Caco-2 (cell line): ENCODE measurements at regions of chr6 and their contacts with region 1.

Region 1: DNA sequence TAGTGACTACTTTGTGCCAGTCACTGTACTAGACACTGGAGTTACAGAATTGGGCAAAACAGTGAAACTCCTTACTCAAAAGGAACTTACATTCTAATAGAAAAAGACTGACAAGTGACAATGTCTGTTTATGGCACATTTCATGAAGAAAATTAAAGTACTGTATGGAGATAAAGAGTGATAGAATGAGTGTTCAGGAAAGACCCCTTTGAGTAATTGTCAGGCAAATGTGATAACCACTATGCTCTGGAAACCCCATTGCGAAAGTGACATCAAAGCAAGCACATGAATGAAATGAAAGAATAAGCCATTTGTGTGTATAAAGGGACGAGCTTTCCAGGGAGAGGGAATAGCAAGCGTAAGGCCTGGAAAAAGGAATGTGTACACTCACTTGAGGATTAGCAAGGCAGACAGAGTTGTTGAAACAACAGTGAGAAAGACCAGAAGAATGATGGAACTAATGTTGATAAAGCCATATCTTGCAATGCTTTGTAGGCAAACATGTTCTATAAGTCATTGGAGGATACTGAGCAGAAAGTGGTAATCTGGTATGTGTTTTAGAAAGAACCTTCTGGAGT is 490.0 kb downstream of the GRIK2 start:
- DNase-seq: peak; percentile 35 to 51
- H3K4me3 ChIP-seq: no peak overlapping the region
- H3K4me3 Mint-ChIP-seq: no peak overlapping the region
- H3K27ac Mint-ChIP-seq: peak overlapping the region; percentile 16
- H3K4me1 ChIP-seq: peaks cover 17% of the 10 kb centered on the region; the same call in 1 of the 2 replicates
- H3K4me1 Mint-ChIP-seq: peaks cover 17% of the 10 kb centered on the region
- H3K27me3 ChIP-seq: no peaks in the 10 kb centered on the region
- H3K27me3 Mint-ChIP-seq: no peaks in the 10 kb centered on the region
- CTCF ChIP-seq: no peak

Region 2: DNA sequence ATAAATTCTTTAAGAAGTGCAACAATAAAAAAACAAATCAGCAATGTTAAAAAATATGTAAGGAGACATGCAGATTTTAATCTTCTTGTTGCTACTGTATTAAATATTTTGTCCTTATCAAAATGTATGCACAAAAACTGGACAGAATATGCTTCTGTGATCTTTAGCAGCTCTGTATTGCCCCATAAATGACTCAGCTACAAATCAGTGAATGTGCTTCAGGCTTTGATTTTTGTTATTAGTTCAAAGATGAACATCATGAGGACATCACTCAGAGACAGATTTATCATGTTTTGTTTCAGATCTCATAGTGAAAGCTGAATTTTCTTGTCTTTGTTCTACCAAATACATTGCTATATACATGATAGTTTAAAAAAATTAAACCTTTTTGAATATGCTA is 177.6 kb before region 1 on chr6:
- CTCF ChIA-PET with region 1: no interaction called
- POLR2A ChIA-PET with region 1: no interaction called
- intact Hi-C with region 1: no loop called
- DNase-seq: no peak
- H3K4me3 ChIP-seq: no peak overlapping the region
- H3K4me3 Mint-ChIP-seq: no peak overlapping the region
- H3K27ac Mint-ChIP-seq: no peak overlapping the region
- H3K4me1 ChIP-seq: no peaks in the 10 kb centered on the region
- H3K4me1 Mint-ChIP-seq: no peaks in the 10 kb centered on the region
- H3K27me3 ChIP-seq: no peaks in the 10 kb centered on the region
- H3K27me3 Mint-ChIP-seq: no peaks in the 10 kb centered on the region
- CTCF ChIP-seq: no peak

Region 3: DNA sequence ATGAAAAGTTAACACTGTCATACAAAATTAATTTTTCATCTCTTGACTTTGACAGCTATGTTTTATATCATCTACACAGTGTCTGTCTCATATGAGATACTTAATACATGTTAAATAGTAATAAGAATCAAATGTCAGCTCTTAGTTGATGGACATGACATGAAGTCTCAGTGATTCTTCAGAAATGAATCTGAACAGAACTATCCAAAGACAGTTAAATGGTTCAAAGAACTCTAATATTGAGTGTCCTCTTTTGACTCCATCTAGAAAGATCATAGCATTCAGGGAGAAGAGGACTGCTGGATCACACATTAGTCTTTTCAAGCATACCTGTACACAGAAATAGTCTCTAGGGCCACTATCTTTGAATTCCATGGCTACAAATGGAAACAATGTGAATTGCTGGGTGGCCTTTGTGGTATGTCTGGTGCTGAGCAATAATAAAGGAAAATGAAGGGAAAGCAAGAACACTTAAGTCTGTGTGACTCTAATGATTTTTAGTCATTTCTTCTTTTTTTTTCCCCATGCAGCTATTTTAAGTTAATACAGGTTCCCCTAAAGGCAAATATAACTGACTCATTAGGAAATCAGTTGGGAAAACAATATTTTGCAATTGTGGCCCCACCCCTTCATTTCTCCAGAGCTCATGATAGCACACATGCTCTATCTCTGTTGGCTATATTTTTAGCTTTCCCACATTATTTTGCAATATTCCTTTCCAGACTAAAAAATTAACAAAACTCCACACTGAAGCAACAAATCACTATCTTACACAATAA is 122.5 kb before region 1 on chr6:
- CTCF ChIA-PET with region 1: no interaction called
- POLR2A ChIA-PET with region 1: no interaction called
- intact Hi-C with region 1: loop called (anchors 5 kb)
- DNase-seq: no peak
- H3K4me3 ChIP-seq: no peak overlapping the region
- H3K4me3 Mint-ChIP-seq: no peak overlapping the region
- H3K27ac Mint-ChIP-seq: no peak overlapping the region
- H3K4me1 ChIP-seq: peaks cover 8% of the 10 kb centered on the region; the same call in 1 of the 2 replicates
- H3K4me1 Mint-ChIP-seq: peaks cover 16% of the 10 kb centered on the region
- H3K27me3 ChIP-seq: no peaks in the 10 kb centered on the region
- H3K27me3 Mint-ChIP-seq: no peaks in the 10 kb centered on the region
- CTCF ChIP-seq: no peak

Region 4: GRCh38 chr6:101956961-101957360 is 73.5 kb after region 1 on chr6:
- CTCF ChIA-PET with region 1: no interaction called
- POLR2A ChIA-PET with region 1: no interaction called
- intact Hi-C with region 1: no loop called
- DNase-seq: no peak
- H3K4me3 ChIP-seq: no peak overlapping the region
- H3K4me3 Mint-ChIP-seq: no peak overlapping the region
- H3K27ac Mint-ChIP-seq: no peak overlapping the region
- H3K4me1 ChIP-seq: no peaks in the 10 kb centered on the region
- H3K4me1 Mint-ChIP-seq: no peaks in the 10 kb centered on the region
- H3K27me3 ChIP-seq: no peaks in the 10 kb centered on the region
- H3K27me3 Mint-ChIP-seq: no peaks in the 10 kb centered on the region
- CTCF ChIP-seq: no peak

Region 5: DNA sequence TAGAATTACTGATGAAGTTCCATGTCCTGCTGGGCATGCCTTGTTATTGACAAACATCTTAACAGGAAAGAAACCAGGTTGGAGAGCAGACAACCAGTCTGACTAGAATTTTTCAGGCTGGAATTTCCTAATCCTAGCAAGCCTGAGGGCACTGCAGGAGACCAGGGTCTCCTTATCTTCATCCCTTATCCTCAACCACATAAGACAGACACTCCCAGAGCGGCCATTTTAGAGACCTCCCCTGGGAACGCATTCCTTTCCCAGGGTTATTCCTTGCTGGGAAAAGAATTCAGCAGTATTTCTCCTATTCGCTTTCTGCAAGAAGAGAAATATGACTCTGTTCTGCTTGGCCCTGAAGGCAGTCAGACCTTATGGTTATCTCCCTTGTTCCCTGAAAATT is 313.7 kb after region 1 on chr6:
- CTCF ChIA-PET with region 1: no interaction called
- POLR2A ChIA-PET with region 1: no interaction called
- intact Hi-C with region 1: no loop called
- DNase-seq: peak in 1 of 2 experiments; percentile 38
- H3K4me3 ChIP-seq: no peak overlapping the region
- H3K4me3 Mint-ChIP-seq: no peak overlapping the region
- H3K27ac Mint-ChIP-seq: no peak overlapping the region
- H3K4me1 ChIP-seq: no peaks in the 10 kb centered on the region
- H3K4me1 Mint-ChIP-seq: no peaks in the 10 kb centered on the region
- H3K27me3 ChIP-seq: no peaks in the 10 kb centered on the region
- H3K27me3 Mint-ChIP-seq: no peaks in the 10 kb centered on the region
- CTCF ChIP-seq: no peak